Left cardiac atrium (tissue), 4 donors: ENCODE measurements at regions of chr9 and their contacts with region 1.

Region 1: GRCh38 chr9:135085830-135086546 is 1.5 kb upstream of the OLFM1 start:
- DNase-seq: peak; percentile 79
- ATAC-seq: peak; percentile 73 to 82

Region 2: DNA sequence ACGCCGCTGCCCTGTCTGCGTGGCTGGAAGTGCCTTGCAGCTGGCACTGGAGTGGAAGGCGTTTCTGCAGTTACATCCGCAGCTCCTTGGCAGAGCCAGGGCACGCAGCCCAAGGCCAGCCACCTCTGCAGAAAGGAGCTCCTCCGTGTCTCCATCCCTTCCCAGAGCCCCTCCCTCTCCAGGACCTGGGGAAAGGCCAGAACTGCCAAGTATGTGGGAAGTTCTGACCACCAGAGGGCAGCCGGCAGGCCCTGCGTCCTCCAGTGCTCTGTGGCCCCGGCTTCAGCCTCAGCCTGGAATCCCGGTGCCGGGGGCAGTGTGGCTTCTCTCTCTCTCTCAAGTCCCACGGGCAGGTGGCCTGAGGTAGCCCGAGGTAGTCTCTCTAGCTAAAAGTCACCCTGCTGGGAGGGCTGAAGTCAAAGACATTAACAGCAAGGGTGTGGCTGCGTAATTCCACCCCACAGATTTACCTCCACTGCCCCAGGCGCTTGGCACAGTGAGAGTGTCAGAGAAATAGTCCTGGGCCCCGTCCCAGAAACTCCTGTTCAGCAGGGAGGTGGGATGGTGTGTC is 307.1 kb before region 1 on chr9:
- intact Hi-C with region 1: loop called in 1 of 2 experiments (anchors 10 kb)
- DNase-seq: peak; percentile 73
- ATAC-seq: peak; percentile 76 to 79

Region 3: DNA sequence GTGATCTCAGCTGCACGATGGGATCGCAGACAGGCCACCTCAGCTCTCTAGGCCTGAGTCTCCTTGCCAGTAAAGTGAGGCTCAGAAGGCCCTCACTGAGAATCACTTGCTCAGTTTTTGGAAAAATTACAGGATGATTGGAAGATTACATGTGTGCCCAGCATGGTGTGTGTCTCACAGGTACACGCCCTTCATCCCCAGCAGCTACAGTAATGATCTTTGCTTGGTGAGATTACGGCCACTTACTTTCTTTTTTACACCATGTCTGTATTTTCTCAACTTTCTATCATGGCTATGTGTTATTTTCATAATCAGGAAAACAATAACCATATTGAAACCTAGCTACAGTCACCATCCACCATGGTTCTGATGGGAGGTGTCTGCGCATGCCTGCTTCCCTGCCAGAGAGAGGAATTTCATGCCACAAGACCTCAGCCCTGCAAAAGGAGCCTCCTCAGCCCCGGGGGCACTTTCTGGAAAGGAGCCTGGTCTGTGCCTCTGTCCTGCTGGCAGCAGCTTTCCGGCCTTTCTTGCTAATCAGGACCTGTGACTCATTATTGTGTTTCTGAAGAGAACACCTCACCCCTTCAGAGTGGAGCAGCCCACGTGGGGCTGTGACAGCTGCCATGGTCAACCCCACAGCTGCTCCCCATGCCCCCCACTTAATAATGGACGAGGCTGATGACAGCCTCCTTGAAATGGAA is 62.7 kb before region 1 on chr9:
- intact Hi-C with region 1: no loop called
- DNase-seq: no peak
- ATAC-seq: peak in 1 of 2 donors; percentile 49

Region 4: DNA sequence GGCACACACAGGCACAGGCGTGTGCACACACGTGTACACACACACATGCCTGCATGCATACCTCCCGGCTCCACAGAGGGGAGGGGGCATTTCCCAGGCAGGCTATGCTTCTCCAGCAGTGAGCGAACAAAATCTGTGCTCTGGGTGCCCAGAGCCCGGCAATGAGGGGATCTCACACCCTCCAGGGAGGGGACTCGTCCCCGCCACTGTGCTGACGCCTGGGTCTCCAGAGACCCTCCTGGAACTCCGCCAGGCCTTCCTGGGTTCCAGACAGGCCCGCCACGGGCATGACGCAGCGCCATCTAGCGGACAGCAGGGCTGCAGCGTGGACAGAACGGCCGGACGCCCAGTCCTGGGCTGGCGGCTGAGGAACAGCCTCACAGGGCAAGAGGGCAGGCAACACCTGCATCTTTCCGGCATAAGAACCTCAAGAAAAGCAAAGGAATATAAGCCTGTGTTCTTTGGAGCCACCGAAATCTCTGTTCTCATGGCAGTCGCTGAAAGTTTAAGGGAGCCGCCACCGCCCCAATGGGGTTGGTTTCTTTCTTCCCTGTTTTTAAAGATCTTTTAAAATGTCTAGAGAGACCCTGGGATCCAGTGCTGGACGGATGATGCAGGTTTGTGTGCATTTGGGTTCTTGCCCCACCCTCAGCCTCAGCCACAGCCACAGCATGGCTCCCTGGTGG is 258.0 kb after region 1 on chr9:
- intact Hi-C with region 1: loop called (anchors 1 to 2 kb)
- DNase-seq: peak; percentile 73
- ATAC-seq: peak; percentile 65 to 68

Region 5: DNA sequence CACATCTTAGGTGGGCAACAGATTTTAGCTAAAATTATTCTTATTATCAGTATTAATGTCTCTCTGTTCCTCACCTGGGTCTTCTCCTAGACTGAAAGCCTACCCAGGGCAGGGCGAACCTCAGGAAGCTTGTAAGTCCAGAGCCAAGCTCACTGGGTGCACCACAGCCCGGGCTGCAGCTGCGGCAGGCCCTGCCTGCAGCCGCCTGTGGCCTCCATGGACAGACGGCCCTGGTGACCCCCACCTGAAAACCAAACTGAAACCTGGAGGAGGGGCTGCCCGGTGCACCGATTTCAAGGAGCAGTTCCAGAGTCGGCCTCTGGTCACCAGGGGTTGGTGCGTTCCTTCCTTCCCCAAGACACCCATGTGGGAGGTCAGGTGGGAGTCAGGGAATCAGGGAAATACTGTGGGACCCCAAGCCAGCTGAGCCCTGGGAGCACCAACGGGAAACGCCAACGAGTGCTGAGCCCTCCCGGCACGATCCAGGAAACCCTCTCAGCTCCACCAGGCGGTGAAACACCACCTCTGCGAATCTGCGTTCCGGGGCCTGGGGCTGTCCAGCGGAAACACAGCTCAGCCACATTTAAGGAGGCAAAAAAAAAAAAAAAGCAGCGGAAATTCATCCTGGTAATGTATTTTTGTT is 325.0 kb after region 1 on chr9:
- intact Hi-C with region 1: loop called (anchors 1 to 5 kb)
- DNase-seq: no peak
- ATAC-seq: no peak